Posterior vena cava (tissue), 2 donors: ENCODE measurements at regions of chr20 and their contacts with region 1.

Region 1: GRCh38 chr20:18623156-18623910 is 35.5 kb downstream of the DTD1 start:
- DNase-seq: no peak

Region 2: GRCh38 chr20:18587665-18588573 is 35.4 kb before region 1 on chr20 and contains the start of gene DTD1:
- intact Hi-C with region 1: loop called in 1 of 2 experiments (anchors 1 kb)
- DNase-seq: peak; percentile 99
- total RNA-seq, gene DTD1: 21.5 to 23.6 TPM

Region 3: DNA sequence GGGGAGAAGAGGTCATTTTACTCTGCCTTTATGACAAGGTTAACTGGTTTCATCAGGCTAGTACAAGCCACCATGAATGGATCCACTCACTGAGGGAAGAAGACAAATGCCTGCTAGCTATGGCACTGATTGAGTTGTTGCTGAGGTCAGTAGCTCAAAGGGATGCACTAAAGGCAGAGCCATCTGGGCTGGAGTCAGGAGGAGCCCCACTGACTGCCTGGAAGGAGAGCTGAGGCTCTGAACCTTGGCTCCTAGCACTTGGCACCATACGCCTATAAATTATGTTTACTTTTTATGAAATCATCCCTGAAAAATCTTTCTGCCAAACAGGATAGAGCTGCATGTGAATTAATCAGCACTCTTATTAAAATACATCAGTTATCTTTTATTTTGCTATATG is 69.1 kb after region 1 on chr20:
- intact Hi-C with region 1: no loop called
- DNase-seq: no peak